ENCODE measurements at regions of chr13 and their contacts with region 1.

Region 1: GRCh38 chr13:46721054-46721453 is 75.9 kb downstream of the ESD start:
- DNase-seq: peak; percentile 20
- H3K27ac ChIP-seq: no peak overlapping the region
- CTCF ChIP-seq: peak; percentile 58

Region 2: DNA sequence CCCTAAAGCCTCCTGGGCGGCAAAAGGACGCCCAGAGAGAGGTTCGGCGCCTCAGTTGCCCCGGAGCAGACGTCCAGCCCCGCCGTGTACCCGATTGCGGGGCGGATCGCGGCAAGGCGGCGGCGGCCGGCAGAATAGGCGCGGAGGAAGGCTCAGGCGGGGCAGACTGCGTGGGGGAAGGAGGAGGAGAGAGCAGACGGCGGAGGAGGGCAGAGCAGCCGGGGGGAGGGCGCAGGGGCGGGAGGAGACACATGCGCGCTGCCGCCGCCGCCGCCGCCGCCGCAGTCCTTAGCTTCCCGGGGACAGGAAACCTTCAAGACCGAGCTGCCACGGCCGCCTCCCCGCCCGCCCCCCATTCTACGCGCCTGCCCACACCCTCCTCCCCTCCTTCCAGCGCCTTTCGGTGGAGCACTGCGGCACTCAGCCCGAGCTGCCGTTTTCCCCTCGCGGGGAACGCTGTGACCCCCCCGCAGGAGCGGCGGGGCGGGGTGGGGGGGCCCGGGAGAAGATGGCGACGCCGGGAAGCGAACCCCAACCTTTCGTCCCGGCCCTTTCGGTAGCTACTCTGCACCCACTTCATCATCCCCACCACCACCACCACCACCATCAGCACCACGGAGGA is 168.1 kb before region 1 on chr13 and contains the start of gene LRCH1:
- CTCF ChIA-PET with region 1: interaction called, 30 read pairs
- POLR2A ChIA-PET with region 1: no interaction called
- DNase-seq: peak; percentile 87
- H3K27ac ChIP-seq: peak within 1 kb of the TSS; percentile 95
- CTCF ChIP-seq: no peak

Region 3: DNA sequence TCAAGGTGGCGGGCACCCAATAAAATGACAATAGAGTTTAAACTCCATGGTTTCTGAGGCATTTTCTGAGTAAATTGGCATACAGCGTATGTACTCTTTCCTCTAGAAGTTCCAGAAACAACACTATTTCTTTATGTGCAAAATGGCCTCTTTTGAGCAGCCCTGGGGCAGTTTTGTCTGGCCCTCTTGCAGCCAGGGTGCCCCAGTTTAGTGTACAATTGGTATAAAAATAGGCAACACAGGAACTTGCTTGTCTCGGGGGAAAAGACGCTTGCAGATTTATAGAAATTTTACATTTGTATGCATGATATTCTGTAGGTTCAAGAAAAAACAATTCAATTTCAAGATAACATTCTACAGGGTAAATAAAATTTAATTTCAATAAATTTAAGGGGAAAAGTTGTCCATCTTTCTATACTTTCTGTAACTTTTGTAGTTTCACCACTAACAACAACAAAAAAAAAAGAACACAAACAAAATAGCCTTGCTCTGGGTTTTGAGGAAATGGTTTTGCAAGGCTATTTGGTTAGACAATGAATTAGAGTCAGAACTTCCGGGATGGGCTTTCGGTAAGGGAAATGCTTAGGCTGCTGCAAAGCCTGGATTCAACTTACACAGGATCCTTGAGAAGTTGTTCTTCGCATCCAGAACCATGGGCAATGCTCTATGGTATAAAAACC is 122.8 kb before region 1 on chr13:
- CTCF ChIA-PET with region 1: no interaction called
- POLR2A ChIA-PET with region 1: no interaction called
- DNase-seq: no peak
- H3K27ac ChIP-seq: no peak overlapping the region
- CTCF ChIP-seq: no peak

Region 4: DNA sequence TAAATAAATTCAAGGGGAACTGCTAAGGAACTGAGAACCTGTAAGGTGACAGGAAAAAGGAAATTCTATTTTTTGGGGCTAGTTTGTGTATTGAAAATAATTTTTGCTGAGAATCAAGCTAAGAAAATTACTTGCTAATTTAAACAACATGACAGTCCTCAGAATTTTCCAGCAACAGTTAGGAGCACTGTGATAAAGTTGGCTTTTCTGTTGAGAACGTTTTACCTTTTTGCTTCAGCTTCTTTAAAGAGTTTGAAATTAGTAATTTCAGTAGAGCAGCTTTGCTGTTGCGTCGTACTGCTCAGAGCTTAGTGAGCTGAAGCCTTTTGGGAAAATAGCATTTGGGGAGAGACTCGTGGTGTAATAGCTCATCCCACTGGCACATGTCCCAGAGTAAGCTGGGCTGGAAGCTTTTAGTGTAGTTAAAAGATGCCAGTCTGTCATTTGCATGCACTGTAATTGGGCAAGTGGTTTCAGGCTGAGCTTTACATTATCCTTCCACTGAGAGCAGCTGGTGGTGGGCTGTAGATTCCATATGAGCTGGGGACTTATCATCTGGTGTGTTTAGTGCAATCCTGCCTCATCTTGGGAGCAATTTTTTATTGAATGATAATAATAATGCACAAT is 98.3 kb before region 1 on chr13:
- CTCF ChIA-PET with region 1: no interaction called
- POLR2A ChIA-PET with region 1: no interaction called
- DNase-seq: no peak
- H3K27ac ChIP-seq: no peak overlapping the region
- CTCF ChIP-seq: no peak

Region 5: DNA sequence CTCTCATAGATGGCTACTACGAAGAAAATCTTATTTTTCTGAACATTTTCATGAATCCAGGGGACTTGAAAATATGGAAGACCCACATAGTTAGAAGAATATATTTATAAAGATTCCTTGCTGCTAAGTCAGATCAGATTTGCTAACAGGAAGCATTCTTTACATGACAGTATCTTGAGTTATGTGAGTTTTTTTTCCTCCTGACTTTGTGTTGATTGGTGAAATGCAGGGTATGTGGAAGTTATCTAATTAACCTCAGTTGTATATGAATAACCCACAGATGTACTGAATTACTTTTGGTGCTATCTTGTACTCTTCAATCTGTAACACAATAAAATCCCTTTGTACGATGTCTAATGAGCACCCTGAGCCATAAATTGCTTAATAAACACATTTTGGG is 22.1 kb after region 1 on chr13:
- CTCF ChIA-PET with region 1: no interaction called
- POLR2A ChIA-PET with region 1: no interaction called
- DNase-seq: no peak
- H3K27ac ChIP-seq: no peak overlapping the region
- CTCF ChIP-seq: no peak

Measured in RWPE1 (cell line).